ENCODE measurements at regions of chr1 and their contacts with region 1.

Region 1: DNA sequence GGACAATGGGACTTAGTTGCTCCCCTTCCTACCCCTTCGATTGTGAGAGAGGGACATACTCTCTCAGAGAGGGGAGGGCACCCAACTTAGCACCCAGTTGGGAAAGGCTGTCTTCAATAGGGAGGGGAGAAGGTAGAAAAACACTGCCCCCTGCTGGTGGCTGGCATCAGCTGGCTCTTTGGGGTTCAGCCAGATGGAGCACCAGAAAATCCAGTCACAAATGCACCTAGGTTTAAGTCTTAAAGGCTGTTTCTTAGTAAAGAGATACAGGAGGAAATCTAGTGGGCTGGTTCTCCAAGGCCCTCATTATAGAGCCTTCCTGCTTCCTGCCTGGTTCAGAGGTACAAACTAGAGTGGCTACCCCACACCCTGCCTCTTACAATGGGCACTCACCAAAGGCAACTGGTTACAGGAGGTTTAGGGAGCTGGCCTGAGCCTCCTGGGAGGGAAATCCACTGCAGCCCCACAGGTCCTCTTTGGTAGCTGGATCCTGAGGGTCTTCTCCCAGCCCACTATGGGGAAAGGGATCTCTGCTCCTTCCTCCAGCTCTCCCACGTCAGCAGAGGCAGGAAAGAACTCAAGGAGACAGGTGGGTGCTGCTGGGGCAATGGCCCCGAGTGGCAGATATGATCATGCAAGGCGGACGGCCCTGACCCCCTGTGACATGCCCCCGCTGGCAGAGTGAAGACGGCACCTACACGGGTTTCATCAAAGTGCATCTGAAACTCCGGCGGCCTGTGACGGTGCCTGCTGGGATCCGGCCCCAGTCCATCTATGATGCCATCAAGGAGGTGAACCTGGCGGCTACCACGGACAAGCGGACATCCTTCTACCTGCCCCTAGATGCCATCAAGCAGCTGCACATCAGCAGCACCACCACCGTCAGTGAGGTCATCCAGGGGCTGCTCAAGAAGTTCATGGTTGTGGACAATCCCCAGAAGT is 28.3 kb downstream of the EIF2D start:
- DNase-seq: peak; percentile 80
- ATAC-seq: peak; percentile 55 to 72

Region 2: DNA sequence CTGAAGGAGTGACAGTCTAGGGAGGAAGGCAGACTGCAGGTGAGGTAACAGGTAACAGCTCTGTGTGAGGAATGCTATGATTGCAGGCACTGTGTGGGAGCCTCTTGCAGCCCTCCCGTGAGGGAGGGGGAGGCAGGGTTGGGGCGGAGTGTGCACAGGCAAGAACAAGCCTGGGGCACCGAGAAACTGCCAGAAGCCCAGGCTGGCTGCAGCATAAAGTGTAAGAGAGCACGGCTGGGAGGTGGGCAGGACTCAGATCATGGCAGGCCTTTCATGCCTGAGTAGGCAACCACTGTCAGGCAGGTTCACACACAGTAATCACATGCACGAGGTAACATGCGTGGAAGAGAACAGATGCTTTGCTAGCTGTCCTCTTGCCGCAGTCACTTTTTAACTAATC is 542.3 kb before region 1 on chr1:
- intact Hi-C with region 1: no loop called
- DNase-seq: no peak
- ATAC-seq: no peak

Region 3: GRCh38 chr1:206489980-206490770 is 93.8 kb before region 1 on chr1:
- intact Hi-C with region 1: loop called (anchors 1 to 5 kb)
- DNase-seq: peak; percentile 82
- ATAC-seq: peak; percentile 81 to 85

Region 4: DNA sequence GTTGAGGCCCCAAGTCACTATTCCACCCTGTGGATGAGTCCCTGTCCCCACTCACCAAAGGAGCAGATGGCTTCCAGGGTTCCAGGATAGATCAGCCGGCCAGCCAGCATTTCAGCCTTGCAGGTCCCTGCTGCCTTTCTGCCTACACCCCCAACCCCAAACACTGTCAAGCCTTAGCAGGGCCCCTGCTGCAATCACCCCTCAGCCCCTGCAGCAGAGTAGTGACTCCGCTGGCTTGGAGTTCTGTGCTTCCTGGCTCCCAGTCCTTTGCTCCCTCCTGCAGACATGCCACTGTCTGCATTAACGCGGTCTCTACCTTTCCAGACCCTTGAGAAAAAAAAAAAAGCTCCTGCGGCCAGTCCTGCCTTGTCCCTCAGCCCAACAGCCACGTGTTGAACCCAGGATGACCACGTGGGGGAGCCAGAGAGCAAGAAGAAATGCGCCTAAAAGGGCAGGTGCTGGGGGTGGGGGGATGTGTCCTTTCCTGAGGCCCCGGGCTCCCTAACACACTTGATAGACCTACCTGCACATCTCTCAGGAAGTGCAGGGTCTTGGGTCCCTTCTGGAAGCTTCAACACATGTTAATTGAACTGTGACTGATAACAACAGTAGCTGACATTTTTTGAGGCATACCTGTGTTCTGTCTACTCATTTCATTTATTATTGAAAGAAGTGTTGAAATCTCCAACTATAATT is 39.3 kb before region 1 on chr1:
- intact Hi-C with region 1: loop called (anchors 5 kb)
- DNase-seq: peak; percentile 77
- ATAC-seq: peak; percentile 60 to 62

Region 5: GRCh38 chr1:206839857-206840256 is 255.9 kb after region 1 on chr1:
- intact Hi-C with region 1: no loop called
- DNase-seq: no peak
- ATAC-seq: peak in 1 of 2 donors; percentile 35

Measured in left cardiac atrium (tissue), 4 donors.